ENCODE measurements at regions of chr15 and their contacts with region 1.

Region 1: GRCh38 chr15:51401872-51402517 is 60.5 kb downstream of the GLDN start:
- DNase-seq: peak; percentile 44 to 80
- ATAC-seq: peak; percentile 41 to 82; a peak in 5 of 6 replicates
- H3K4me3 ChIP-seq: no peak overlapping the region
- H3K27ac ChIP-seq: no peak overlapping the region
- H3K4me1 ChIP-seq: no peaks in the 10 kb centered on the region
- CTCF ChIP-seq: peak; percentile 57
- EP300 ChIP-seq: no peak
- POLR2A ChIP-seq: no peak
- RAD21 ChIP-seq: peak; percentile 48 to 74; a peak in 3 of 5 replicates

Region 2: DNA sequence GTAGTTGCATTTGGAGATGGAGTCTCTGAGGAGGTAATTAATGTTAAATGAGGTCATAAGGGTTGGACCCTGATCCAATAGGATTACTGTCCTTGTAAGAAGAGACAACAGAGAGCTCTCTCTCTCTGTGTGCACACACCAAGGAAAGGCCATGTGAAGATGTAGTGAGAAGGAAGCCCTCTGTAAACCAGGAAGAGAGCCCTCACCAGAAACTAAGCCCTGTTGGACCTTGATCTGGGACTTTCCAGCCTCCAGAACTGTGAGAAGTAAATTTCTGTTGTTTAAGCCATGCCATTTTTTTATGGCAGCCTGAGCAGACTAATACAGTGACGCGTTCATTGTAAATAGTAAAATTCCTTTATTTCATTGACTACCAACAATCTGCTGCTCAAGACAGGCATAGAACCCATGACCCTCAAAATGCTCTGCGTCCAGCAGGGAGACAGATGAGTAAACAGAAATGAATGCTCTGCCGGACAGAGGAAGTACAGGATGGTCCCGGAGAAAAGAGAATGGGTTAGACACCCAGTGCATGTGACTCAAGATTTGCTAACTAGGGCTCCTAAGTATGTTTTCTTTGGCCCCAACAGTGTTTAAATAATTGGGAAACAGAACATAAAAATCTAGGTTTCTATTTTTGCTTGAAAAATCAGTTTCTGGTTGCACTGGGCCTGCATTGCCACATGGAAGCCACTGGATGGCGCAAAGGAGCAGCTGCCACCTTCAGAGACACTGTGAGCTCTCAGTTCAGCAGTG is 269.4 kb before region 1 on chr15:
- CTCF ChIA-PET with region 1: interaction called, 10 read pairs
- POLR2A ChIA-PET with region 1: no interaction called
- DNase-seq: peak; percentile 55 to 69
- ATAC-seq: peak; percentile 74 to 89
- H3K4me3 ChIP-seq: no peak overlapping the region
- H3K27ac ChIP-seq: peak overlapping the region; percentile 54 to 57
- H3K4me1 ChIP-seq: peaks cover 13% of the 10 kb centered on the region
- CTCF ChIP-seq: peak; percentile 86
- EP300 ChIP-seq: no peak
- POLR2A ChIP-seq: no peak
- RAD21 ChIP-seq: peak; percentile 68 to 69

Region 3: DNA sequence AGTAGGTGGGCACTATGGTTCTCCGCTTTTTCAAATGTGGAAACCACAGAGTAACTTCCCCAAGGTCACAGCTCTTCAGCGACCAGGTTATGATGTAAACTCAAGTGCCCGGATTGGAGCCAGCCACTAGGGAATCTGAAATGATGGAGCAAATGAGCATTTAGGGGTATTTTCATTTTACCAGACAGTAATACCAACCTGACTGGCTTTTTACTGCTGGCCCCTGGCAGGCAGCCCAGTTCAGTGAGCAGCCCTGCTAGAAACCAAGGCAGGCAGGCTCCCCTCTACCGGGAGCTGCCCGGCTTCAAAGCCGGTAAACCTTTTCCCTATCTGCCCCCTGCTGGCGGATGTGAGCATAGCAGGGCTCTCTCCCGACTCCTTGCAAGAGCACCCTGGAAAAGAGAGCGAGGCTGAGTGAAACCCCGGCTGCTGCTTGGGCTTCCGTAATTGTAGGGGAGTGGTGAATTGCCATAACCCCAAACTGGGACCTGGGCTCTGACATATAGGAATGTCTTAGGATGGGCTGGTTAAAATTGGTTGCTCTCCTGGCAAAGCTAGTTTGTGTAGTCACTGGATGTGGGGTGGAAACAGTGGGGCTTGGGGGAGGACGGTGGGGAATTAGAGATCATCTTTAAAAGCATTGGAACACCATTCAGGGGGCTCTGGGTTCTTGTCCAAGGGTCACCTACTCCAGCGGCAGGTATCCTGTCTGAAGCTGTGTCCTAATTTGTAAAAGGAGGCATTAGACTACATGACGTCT is 209.3 kb before region 1 on chr15:
- CTCF ChIA-PET with region 1: interaction called, 10 read pairs
- POLR2A ChIA-PET with region 1: no interaction called
- DNase-seq: peak; percentile 81 to 84
- ATAC-seq: peak; percentile 91 to 98
- H3K4me3 ChIP-seq: no peak overlapping the region
- H3K27ac ChIP-seq: no peak overlapping the region
- H3K4me1 ChIP-seq: no peaks in the 10 kb centered on the region
- CTCF ChIP-seq: peak; percentile 92
- EP300 ChIP-seq: no peak
- POLR2A ChIP-seq: no peak
- RAD21 ChIP-seq: peak; percentile 81 to 88

Region 4: GRCh38 chr15:51253366-51253765 is 148.6 kb before region 1 on chr15:
- CTCF ChIA-PET with region 1: interaction called, 10 read pairs
- POLR2A ChIA-PET with region 1: no interaction called
- DNase-seq: no peak
- ATAC-seq: no peak
- H3K4me3 ChIP-seq: no peak overlapping the region
- H3K27ac ChIP-seq: no peak overlapping the region
- H3K4me1 ChIP-seq: no peaks in the 10 kb centered on the region
- CTCF ChIP-seq: no peak
- EP300 ChIP-seq: no peak
- POLR2A ChIP-seq: no peak
- RAD21 ChIP-seq: no peak

Region 5: GRCh38 chr15:51281368-51281967 is 120.5 kb before region 1 on chr15:
- CTCF ChIA-PET with region 1: interaction called, 68 read pairs
- POLR2A ChIA-PET with region 1: no interaction called
- DNase-seq: peak; percentile 60 to 65
- ATAC-seq: peak; percentile 94 to 99; a peak in 5 of 6 replicates
- H3K4me3 ChIP-seq: no peak overlapping the region
- H3K27ac ChIP-seq: no peak overlapping the region
- H3K4me1 ChIP-seq: no peaks in the 10 kb centered on the region
- CTCF ChIP-seq: peak; percentile 70
- EP300 ChIP-seq: no peak
- POLR2A ChIP-seq: no peak
- RAD21 ChIP-seq: peak; percentile 80 to 85

Region 6: GRCh38 chr15:51390966-51391432 is 11.0 kb before region 1 on chr15:
- CTCF ChIA-PET with region 1: interaction called, 96 read pairs
- POLR2A ChIA-PET with region 1: no interaction called
- DNase-seq: no peak
- ATAC-seq: no peak
- H3K4me3 ChIP-seq: no peak overlapping the region
- H3K27ac ChIP-seq: no peak overlapping the region
- H3K4me1 ChIP-seq: no peaks in the 10 kb centered on the region
- CTCF ChIP-seq: no peak
- EP300 ChIP-seq: no peak
- POLR2A ChIP-seq: no peak
- RAD21 ChIP-seq: no peak

Region 7: DNA sequence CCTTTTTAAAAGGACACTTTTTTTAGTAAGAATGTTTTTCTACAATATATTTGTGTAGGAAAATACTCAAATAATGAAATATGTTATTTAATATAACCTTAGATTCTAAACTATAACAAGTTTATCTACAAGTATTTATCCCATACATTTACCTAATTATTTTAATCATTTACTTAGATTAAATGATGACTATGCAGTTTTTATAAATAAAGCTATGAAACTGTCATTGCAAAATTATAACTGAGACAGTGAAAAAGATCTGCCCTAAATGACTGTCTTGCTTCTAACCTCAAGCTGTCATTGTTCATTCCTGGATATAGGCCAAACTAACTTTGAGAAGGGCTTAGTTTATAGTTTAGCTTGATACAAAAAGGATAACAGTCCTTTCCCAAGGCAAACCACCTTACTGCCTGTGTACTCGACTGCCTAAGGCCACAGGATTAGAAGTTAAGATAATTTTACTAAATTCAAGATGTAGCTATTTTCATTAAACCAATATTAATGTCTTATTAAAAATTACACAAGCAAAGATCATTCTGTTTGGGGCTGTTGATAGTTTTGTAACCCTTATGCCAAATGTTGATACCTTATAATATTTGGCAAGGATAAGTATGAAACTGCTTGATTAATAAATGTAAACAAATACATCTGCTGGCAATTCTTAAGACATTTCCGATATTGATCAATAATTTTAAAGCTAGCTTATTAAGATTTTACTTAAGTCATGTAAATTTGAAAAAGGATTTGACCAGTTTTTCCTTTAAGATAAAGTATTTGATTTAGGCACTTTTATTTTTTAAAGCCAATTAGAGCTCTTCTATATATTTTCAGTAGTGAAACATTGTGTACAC is 23.7 kb after region 1 on chr15:
- CTCF ChIA-PET with region 1: interaction called, 11 read pairs
- POLR2A ChIA-PET with region 1: no interaction called
- DNase-seq: no peak
- ATAC-seq: no peak
- H3K4me3 ChIP-seq: no peak overlapping the region
- H3K27ac ChIP-seq: no peak overlapping the region
- H3K4me1 ChIP-seq: no peaks in the 10 kb centered on the region
- CTCF ChIP-seq: no peak
- EP300 ChIP-seq: no peak
- POLR2A ChIP-seq: no peak
- RAD21 ChIP-seq: no peak

Region 8: DNA sequence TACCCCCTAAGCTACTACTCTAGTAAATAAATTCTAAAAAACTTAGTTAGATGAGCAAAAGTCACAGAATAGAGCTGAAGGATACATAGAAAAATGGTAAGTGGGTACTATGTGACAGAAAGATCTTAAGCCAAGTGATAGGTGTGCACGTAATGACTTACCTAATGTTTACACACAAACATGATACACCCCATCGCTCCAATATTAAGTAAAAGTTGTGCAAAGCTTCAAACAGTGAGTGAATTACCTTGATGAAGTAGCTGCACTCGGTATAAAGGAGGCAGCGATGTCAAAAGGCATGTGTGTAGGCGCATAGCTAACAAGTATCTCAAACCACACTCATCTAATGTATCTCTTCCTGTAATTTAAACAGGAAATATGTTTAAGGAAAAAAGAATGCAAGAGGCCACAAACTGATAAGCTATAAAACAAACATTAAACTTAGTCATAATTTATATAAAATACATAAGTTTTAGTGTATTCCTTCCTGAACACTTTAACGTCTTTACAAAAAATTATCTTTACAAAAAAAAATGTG is 92.9 kb after region 1 on chr15:
- CTCF ChIA-PET with region 1: no interaction called
- POLR2A ChIA-PET with region 1: no interaction called
- DNase-seq: no peak
- ATAC-seq: no peak
- H3K4me3 ChIP-seq: no peak overlapping the region
- H3K27ac ChIP-seq: no peak overlapping the region
- H3K4me1 ChIP-seq: 0 out of 3 replicates have a peak, but pooled peaks cover 6% of the 10 kb centered on the region
- CTCF ChIP-seq: no peak
- EP300 ChIP-seq: no peak
- POLR2A ChIP-seq: no peak
- RAD21 ChIP-seq: no peak